Mammary epithelial cell (primary cell): ENCODE measurements at regions of chr7 and their contacts with region 1.

Region 1: DNA sequence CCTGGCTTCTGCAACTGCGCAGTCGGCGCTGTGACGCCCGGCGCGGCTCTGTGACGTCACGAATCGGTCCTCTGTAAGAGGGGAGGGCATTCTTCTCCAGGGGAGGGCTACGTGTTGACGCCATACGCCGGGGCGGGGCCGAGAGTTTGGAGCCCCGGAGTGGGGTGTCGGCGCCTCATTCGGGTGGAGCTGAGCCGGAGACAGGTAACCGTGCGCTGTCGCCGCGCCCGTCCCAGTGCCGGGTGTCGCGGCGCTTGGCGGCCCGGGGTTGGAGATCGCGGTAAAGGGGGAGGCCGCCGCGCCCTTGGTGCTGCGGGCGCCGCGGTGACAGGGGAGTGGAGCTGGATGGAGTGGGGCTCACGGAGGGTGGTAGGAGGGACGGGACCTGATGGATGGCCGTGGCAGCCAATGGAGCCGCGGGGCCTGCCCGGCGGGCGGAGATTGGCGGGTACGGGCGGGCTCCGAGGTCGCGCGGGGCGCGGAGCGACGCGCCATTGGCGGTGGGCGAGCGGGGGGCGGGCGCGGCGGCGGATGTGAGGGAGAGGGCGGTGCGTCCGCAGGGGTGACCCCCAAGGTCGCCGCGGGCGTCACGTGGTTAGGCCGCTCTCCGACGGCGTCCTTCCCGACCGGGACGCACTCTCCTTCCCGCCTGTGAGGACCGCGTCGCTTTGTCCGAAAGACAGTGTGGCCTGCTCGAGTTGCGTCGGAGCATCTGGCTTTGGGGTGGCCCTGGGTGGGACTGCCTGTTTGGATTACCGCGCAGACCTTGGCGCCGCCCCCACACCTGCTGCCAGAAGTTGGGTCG is at the start of gene OGDH:
- DNase-seq: peak; percentile 97
- H3K4me3 ChIP-seq: peak within 1 kb of the TSS; percentile 71 to 98 (median 82)
- H3K27ac ChIP-seq: peak within 1 kb of the TSS; percentile 72
- H3K4me1 ChIP-seq: peaks cover 9% of the 10 kb centered on the region
- H3K27me3 ChIP-seq: no peaks in the 10 kb centered on the region
- CTCF ChIP-seq: no peak
- total RNA-seq, gene OGDH: 82.4 to 96.9 TPM

Region 2: DNA sequence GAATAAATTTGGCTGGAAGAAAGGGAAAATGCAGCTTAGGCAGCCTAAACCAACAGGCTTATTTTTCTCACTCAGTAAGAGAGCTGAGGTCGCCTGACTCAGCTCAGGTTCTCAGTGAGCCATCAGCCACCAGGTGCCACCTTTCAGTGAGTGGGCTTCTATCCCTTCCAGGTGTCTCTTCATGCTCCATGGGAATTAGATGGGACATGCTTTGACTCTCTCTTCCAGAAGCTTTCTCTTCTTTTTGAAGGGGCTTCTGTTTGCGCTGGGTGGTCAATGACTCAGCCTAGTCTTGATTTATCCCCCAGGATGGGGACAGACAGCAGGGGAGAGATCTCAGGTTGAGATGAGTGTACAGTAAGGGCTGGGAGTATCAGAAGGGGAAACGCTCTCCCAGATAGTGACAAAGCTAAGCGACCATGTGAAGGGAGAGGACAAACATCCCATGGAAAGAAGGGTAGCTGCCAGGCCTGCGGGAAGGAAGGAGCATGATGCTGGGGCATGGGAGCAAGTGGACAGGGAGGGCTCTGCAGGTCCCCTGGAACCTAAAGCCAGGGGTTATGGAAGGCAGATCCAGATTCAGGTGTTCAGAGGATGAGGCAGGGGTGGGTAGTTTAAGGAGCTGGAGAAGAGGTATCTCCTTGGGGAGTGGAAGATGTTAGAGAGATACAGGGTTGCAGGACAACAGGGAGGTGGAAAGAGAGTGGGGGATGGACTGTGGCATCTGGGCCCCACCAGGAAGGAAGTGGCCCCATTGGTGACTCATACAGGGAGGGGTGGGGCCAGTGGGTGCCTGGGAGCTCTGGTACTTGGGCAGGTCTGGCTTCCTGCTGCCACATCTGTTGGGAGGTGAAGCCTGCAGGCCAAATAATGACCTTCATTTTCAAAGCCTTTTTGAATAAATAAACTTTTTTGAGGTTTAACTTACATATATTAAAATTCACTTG is 32.2 kb after region 1 on chr7:
- CTCF ChIA-PET with region 1: no interaction called
- dilution Hi-C with region 1: no loop called
- in situ Hi-C with region 1: no loop called
- intact Hi-C with region 1: loop called (anchors 1 kb)
- DNase-seq: peak; percentile 89
- H3K4me3 ChIP-seq: no peak overlapping the region
- H3K27ac ChIP-seq: peak overlapping the region; percentile 98
- H3K4me1 ChIP-seq: peaks cover 47% of the 10 kb centered on the region
- H3K27me3 ChIP-seq: no peaks in the 10 kb centered on the region
- CTCF ChIP-seq: peak in 1 of 2 donors; percentile 15

Region 3: GRCh38 chr7:44665531-44666213 is 59.0 kb after region 1 on chr7:
- CTCF ChIA-PET with region 1: no interaction called
- dilution Hi-C with region 1: loop called (anchors 5 kb)
- in situ Hi-C with region 1: no loop called
- intact Hi-C with region 1: no loop called
- DNase-seq: peak; percentile 39
- H3K4me3 ChIP-seq: no peak overlapping the region
- H3K27ac ChIP-seq: no peak overlapping the region
- H3K4me1 ChIP-seq: peaks cover 7% of the 10 kb centered on the region
- H3K27me3 ChIP-seq: no peaks in the 10 kb centered on the region
- CTCF ChIP-seq: no peak

Region 4: DNA sequence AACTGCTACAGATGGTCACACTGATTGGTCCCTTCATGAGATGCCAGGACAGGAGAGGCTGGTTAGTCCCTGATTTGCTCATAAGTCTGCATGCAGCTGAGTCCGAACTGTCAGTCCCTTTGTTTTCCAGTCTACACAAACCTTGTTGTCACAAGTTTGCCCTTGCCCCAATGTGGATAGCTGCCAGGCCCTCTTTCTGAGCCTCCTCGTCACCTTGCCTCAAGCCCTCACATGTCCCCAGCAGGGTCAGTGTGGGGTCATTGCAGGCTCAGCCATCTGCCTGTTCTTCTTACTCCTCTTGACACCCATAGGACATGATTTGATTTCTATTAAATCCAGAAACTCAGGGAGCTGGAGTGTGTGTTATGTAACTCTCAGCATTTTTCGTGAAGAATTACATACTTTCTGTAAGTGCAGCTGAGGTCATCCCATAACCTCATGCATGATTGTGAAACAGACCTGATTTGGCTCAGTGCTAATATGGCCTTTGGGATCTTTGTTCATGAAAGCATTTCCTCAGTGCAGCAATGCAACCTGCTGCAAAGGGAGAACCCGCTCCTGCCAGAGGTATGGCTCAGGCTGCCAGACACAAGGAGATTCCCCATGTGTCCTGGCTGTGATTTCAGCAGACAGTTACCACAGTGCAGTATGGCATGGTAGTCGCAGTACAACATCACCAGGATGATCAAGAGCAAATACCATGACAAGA is 72.0 kb after region 1 on chr7:
- CTCF ChIA-PET with region 1: no interaction called
- dilution Hi-C with region 1: no loop called
- in situ Hi-C with region 1: no loop called
- intact Hi-C with region 1: loop called (anchors 5 kb)
- DNase-seq: peak; percentile 71
- H3K4me3 ChIP-seq: no peak overlapping the region
- H3K27ac ChIP-seq: peak overlapping the region; percentile 11
- H3K4me1 ChIP-seq: peaks cover 21% of the 10 kb centered on the region
- H3K27me3 ChIP-seq: no peaks in the 10 kb centered on the region
- CTCF ChIP-seq: no peak